HepG2 (cell line): ENCODE measurements at regions of chrX and their contacts with region 1.

Region 1: GRCh38 chrX:103356130-103356798 is at the start of gene TCEAL9:
- DNase-seq: peak; percentile 51
- ATAC-seq: peak; percentile 81
- H3K4me3 ChIP-seq: peak within 1 kb of the TSS; percentile 73 to 82 (median 76)
- H3K27ac ChIP-seq: peak within 1 kb of the TSS; percentile 59
- H3K4me1 ChIP-seq: peaks cover 14% of the 10 kb centered on the region
- H3K27me3 ChIP-seq: no peaks in the 10 kb centered on the region; a peak in 1 of 5 replicates
- CTCF ChIP-seq: no peak
- EP300 ChIP-seq: no peak
- POLR2A ChIP-seq: peak in 1 of 2 experiments; percentile 70; a peak in 2 of 4 replicates
- RAD21 ChIP-seq: no peak
- total RNA-seq, gene TCEAL9: 45.8 and 65.4 TPM in 2 replicates

Region 2: GRCh38 chrX:103276539-103277002 is 79.7 kb before region 1 on chrX and contains the start of gene TCEAL5:
- CTCF ChIA-PET with region 1: no interaction called
- POLR2A ChIA-PET with region 1: no interaction called
- in situ Hi-C with region 1: no loop called
- intact Hi-C with region 1: no loop called
- DNase-seq: no peak
- ATAC-seq: no peak
- H3K4me3 ChIP-seq: no peak within 1 kb of the TSS
- H3K27ac ChIP-seq: no peak within 1 kb of the TSS
- H3K4me1 ChIP-seq: no peaks in the 10 kb centered on the region
- H3K27me3 ChIP-seq: no peaks in the 10 kb centered on the region
- CTCF ChIP-seq: no peak
- EP300 ChIP-seq: no peak
- POLR2A ChIP-seq: no peak
- RAD21 ChIP-seq: no peak
- total RNA-seq, gene TCEAL5: not detected in 2 replicates

Region 3: GRCh38 chrX:103376118-103376978 is 20.1 kb after region 1 on chrX and contains the start of gene BEX3:
- CTCF ChIA-PET with region 1: no interaction called
- POLR2A ChIA-PET with region 1: interaction called, 13 read pairs
- in situ Hi-C with region 1: no loop called
- intact Hi-C with region 1: no loop called
- DNase-seq: peak; percentile 24
- ATAC-seq: peak; percentile 91
- H3K4me3 ChIP-seq: peak within 1 kb of the TSS; percentile 47 to 73 (median 70); a peak in 5 of 6 replicates
- H3K27ac ChIP-seq: peak within 1 kb of the TSS; percentile 43
- H3K4me1 ChIP-seq: 0 out of 2 replicates have a peak, but pooled peaks cover 6% of the 10 kb centered on the region
- H3K27me3 ChIP-seq: no peaks in the 10 kb centered on the region
- CTCF ChIP-seq: no peak
- EP300 ChIP-seq: no peak
- POLR2A ChIP-seq: peak in 1 of 2 experiments; percentile 64; a peak in 2 of 4 replicates
- RAD21 ChIP-seq: no peak
- total RNA-seq, gene BEX3: 55.8 and 63.4 TPM in 2 replicates

Region 4: GRCh38 chrX:103431316-103431715 is 75.1 kb after region 1 on chrX:
- CTCF ChIA-PET with region 1: no interaction called
- POLR2A ChIA-PET with region 1: no interaction called
- in situ Hi-C with region 1: no loop called
- intact Hi-C with region 1: no loop called
- DNase-seq: no peak
- ATAC-seq: no peak
- H3K4me3 ChIP-seq: no peak overlapping the region
- H3K27ac ChIP-seq: no peak overlapping the region
- H3K4me1 ChIP-seq: no peaks in the 10 kb centered on the region
- H3K27me3 ChIP-seq: no peaks in the 10 kb centered on the region
- CTCF ChIP-seq: no peak
- EP300 ChIP-seq: no peak
- POLR2A ChIP-seq: no peak
- RAD21 ChIP-seq: no peak

Region 5: DNA sequence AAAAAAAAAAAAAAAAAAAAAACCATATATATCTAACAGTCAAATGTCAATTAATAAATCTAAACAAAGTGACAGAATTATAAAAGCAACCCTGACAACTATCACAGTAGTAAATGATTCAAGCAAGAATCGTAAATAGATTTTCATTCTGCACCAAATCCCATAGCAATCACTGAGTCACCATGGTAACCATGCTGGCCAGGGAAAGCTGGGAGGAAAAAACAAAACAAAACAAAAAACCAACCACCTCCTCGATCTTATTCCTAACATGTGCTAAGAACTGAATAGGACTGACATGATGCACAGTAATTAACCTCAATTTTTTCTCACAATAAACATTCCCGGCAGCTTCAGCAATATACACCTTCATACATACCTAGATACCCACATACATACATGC is 193.7 kb after region 1 on chrX:
- CTCF ChIA-PET with region 1: no interaction called
- POLR2A ChIA-PET with region 1: no interaction called
- in situ Hi-C with region 1: no loop called
- intact Hi-C with region 1: no loop called
- DNase-seq: no peak
- ATAC-seq: no peak
- H3K4me3 ChIP-seq: no peak overlapping the region
- H3K27ac ChIP-seq: no peak overlapping the region
- H3K4me1 ChIP-seq: peaks cover 14% of the 10 kb centered on the region
- H3K27me3 ChIP-seq: no peaks in the 10 kb centered on the region
- CTCF ChIP-seq: no peak
- EP300 ChIP-seq: no peak
- POLR2A ChIP-seq: no peak
- RAD21 ChIP-seq: no peak

Region 6: GRCh38 chrX:103704863-103705262 is 348.6 kb after region 1 on chrX:
- CTCF ChIA-PET with region 1: no interaction called
- POLR2A ChIA-PET with region 1: no interaction called
- in situ Hi-C with region 1: no loop called
- intact Hi-C with region 1: no loop called
- DNase-seq: no peak
- ATAC-seq: no peak
- H3K4me3 ChIP-seq: no peak overlapping the region
- H3K27ac ChIP-seq: no peak overlapping the region
- H3K4me1 ChIP-seq: no peaks in the 10 kb centered on the region
- H3K27me3 ChIP-seq: no peaks in the 10 kb centered on the region
- CTCF ChIP-seq: no peak
- EP300 ChIP-seq: no peak
- POLR2A ChIP-seq: no peak
- RAD21 ChIP-seq: no peak